SK-N-SH (cell line): ENCODE measurements at regions of chr12 and their contacts with region 1.

Region 1: GRCh38 chr12:94545935-94546771 is 86.5 kb upstream of the CEP83 start:
- DNase-seq: peak; percentile 75
- H3K4me3 ChIP-seq: no peak overlapping the region
- H3K27ac ChIP-seq: no peak overlapping the region
- H3K4me1 ChIP-seq: no peaks in the 10 kb centered on the region
- H3K27me3 ChIP-seq: no peaks in the 10 kb centered on the region
- CTCF ChIP-seq: peak; percentile 70
- EP300 ChIP-seq: no peak
- RAD21 ChIP-seq: peak; percentile 95

Region 2: GRCh38 chr12:94560431-94561221 is 14.5 kb after region 1 on chr12:
- CTCF ChIA-PET with region 1: interaction called, 17 read pairs
- POLR2A ChIA-PET with region 1: no interaction called
- DNase-seq: no peak
- H3K4me3 ChIP-seq: no peak overlapping the region
- H3K27ac ChIP-seq: no peak overlapping the region
- H3K4me1 ChIP-seq: peaks cover 0 to 10% of the 10 kb centered on the region in 2 experiments; a peak in 1 of 4 replicates
- H3K27me3 ChIP-seq: no peaks in the 10 kb centered on the region
- CTCF ChIP-seq: no peak
- EP300 ChIP-seq: no peak
- RAD21 ChIP-seq: no peak

Region 3: DNA sequence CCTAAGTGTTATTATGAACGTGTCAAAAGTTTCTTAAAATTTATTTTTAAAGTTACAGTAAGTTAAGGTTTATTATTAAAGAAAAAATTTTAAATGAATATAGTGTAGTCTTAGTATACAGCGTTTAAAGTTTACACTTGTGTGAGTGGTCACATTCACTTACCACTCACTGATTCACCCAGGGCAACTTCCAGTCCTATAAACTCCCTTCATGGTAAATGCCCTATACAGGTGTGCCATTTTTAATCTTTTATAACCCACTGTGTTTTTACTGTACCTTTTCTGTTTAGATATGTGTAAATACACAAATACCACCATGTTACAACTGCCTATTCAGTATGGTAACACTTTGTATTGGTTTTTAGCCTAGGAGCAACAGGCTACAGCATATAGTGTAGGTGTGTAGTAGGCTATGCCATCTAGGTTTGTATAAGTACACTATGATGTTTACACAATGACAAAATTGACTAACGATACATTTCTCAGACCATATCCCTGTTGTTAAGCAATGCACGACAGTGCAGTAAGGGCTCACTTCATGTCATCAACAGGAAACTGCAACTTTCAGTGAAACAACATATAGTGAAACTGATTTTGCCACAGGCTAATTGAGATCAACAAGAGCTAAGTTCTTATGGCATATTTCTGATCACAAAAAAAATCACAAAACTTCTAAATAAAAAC is 216.2 kb after region 1 on chr12:
- CTCF ChIA-PET with region 1: interaction called, 14 read pairs
- POLR2A ChIA-PET with region 1: no interaction called
- DNase-seq: no peak
- H3K4me3 ChIP-seq: no peak overlapping the region
- H3K27ac ChIP-seq: no peak overlapping the region
- H3K4me1 ChIP-seq: no peaks in the 10 kb centered on the region; a peak in 1 of 4 replicates
- H3K27me3 ChIP-seq: no peaks in the 10 kb centered on the region
- CTCF ChIP-seq: no peak
- EP300 ChIP-seq: no peak
- RAD21 ChIP-seq: no peak